Dorsolateral prefrontal cortex (tissue), 120 donors: ENCODE measurements at regions of chr2 and their contacts with region 1.

Region 1: DNA sequence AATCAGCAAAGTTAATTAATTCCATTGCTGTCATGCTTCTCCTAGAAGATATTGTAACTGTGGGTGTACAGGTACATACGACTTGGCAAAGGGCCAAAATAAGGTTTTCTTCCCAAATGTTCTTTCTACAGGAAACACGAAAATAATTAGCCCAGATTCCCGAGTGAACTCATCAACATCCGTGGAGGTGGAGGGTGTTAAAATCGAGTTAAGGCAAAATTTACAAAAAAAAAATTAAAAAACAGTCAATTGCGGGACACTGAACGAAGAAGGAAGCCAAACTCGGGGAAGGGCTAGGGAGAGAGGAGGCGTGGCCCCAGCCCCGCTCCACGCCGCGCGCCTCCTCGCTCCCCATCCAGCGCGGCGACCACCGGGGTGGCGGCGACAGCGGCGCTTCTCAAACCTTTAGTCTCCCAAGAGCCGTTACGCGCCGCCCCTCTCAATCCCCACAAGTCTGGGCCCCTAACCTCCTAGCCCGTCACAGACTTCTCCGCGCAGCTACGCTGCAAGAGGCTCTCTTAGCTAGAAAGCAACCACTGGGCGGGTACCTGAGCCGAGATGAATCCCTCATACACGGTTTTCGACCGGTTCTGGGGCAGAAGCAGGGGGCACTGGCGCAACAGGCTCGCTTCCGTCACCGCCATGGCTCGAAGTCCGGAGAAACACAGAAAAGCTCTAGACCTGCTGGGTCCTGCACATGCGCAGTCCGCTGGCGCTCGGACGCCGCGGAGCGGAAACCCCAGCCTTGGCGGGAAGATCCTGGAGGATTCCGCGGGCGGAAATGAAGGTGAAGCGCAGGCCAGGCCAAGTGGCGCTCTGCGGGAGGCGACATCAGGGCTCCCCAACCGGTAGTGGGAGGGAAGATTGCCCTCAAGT is at the start of gene FANCL:
- DNase-seq: peak; percentile 77 to 94 (median 90)
- H3K4me3 ChIP-seq: peak within 1 kb of the TSS; percentile 66 to 99 (median 88)
- H3K27ac ChIP-seq: peak within 1 kb of the TSS; percentile 73 to 96 (median 90)
- H3K27me3 ChIP-seq: no peaks in the 10 kb centered on the region
- CTCF ChIP-seq: peak in 36 of 56 donors; percentile 11 to 59 (median 34)
- total RNA-seq, gene FANCL: 24.2 to 88.8 (median 42.6) TPM

Region 2: DNA sequence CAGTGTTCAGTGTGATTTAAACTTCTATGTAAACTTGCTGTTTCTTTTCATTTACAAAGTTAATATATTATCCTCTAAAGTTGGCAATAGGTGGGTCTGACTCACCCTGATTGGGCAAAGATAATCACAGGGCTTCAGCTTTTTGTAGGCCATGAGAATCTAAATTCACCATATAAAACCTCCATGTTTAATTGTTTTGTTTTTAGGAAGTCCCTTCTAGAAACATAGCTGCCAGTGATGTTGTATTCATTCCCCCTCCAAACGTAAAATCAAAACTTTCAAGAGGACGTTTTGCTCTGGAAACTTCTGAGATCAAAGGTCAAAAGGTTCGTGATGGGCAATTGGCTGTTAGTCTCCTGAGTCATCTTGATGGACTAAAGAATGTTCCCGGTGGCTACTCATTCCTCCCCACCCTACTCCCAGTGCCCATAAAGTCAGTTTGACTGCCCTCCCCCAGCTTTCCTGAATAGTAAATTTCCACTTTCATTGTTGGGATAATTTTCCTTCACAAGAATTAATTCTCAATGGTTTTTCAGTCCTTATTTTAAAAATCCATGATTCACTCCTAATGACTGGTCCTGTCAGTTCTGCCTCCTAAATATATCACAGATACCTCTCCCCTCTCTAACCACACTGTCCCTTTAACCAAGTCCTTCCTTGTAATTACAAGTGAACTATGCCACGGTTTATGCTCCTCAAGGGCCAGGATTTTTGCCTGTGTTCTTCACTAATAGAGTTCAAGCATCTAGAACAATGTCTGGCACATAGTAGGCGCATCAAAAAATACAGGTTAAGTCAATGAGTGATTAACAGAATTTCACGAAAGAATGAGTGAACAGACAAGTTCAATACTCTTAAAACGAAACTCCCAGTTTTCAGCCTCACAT is 358.7 kb before region 1 on chr2:
- intact Hi-C with region 1: loop called in 1 of 2 experiments (anchors 10 kb)
- DNase-seq: no peak
- H3K4me3 ChIP-seq: peak overlapping the region in 57 of 59 donors; percentile 14 to 70 (median 45)
- H3K27ac ChIP-seq: peak overlapping the region in 55 of 59 donors; percentile 7 to 86 (median 66)
- H3K27me3 ChIP-seq: no peaks in the 10 kb centered on the region
- CTCF ChIP-seq: no peak

Region 3: GRCh38 chr2:58146707-58147106 is 94.2 kb before region 1 on chr2:
- intact Hi-C with region 1: loop called in 1 of 2 experiments (anchors 10 kb)
- DNase-seq: no peak
- H3K4me3 ChIP-seq: no peak overlapping the region
- H3K27ac ChIP-seq: peak overlapping the region in 1 of 59 donors; percentile 10
- H3K27me3 ChIP-seq: no peaks in the 10 kb centered on the region
- CTCF ChIP-seq: no peak

Region 4: GRCh38 chr2:58271826-58272225 is 30.9 kb after region 1 on chr2:
- intact Hi-C with region 1: no loop called
- DNase-seq: no peak
- H3K4me3 ChIP-seq: peak overlapping the region in 1 of 59 donors; percentile 8
- H3K27ac ChIP-seq: peak overlapping the region in 39 of 59 donors; percentile 10 to 85 (median 48)
- H3K27me3 ChIP-seq: no peaks in the 10 kb centered on the region
- CTCF ChIP-seq: no peak

Region 5: DNA sequence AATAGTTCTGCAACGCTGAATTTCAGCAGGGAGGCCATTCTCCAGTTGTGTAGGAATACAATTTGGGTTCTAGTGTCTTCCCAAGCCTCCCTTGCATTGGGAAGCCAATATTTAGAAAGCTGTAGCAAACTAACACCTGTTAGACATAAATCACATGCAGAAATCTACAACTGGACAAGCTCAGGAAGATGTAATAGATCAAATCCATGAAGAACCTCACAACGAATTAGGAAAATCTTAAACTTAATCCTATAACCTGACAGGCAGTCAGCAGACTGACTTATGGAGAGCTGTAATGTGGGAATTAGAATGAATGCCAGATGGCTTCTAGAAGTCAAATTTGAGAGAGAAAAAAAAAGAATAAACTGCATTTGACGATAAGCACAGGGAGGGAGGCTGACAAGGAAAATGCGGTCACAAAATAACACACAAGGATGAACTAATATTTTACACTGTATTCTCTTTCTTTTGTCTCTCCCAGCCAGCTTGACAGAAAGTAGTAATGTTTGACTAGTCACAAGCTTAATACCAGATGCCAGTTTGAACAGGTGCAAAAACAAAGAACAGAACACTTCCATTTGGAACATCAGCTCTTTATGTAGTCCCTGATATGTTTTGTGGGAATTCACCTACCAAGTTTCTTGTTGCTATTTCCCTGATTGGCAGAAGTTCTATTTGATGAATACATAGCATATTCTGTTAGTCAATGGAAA is 51.0 kb after region 1 on chr2:
- intact Hi-C with region 1: loop called in 1 of 2 experiments (anchors 10 kb)
- DNase-seq: no peak
- H3K4me3 ChIP-seq: no peak overlapping the region
- H3K27ac ChIP-seq: peak overlapping the region in 10 of 59 donors; percentile 17 to 78 (median 70)
- H3K27me3 ChIP-seq: no peaks in the 10 kb centered on the region
- CTCF ChIP-seq: no peak

Region 6: DNA sequence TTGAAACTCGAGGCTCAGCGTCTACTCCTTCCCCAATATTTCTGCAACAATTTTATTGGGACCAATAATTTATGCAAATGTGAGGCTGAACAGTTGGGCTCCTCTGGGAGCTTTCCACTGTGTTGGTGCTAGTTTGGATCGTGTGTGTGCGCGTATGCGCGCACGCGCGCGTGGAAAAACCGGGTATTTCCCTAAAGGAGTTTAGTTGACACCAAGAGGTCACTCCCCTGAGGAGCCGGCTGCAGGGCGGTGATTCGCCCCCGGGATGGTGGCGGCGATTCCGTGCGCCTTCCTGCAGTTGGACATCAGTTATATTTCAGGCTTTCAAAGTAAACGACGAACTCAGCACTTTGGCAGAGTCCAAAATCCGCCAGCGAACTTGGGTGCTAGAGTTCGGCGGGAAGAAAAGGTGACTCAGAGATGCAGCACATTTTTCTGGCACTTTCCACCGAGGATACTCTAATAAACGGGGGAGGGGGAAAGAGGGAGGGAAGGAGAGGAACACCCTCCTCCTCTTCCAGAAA is 186.7 kb after region 1 on chr2:
- intact Hi-C with region 1: loop called (anchors 5 to 10 kb)
- DNase-seq: peak; percentile 9 to 81 (median 76)
- H3K4me3 ChIP-seq: peak overlapping the region; percentile 30 to 82 (median 66)
- H3K27ac ChIP-seq: peak overlapping the region; percentile 2 to 99 (median 95)
- H3K27me3 ChIP-seq: peaks cover 0 to 4% (median 0%) of the 10 kb centered on the region in 45 donors
- CTCF ChIP-seq: peak in 6 of 56 donors; percentile 15 to 33 (median 20)

Region 7: DNA sequence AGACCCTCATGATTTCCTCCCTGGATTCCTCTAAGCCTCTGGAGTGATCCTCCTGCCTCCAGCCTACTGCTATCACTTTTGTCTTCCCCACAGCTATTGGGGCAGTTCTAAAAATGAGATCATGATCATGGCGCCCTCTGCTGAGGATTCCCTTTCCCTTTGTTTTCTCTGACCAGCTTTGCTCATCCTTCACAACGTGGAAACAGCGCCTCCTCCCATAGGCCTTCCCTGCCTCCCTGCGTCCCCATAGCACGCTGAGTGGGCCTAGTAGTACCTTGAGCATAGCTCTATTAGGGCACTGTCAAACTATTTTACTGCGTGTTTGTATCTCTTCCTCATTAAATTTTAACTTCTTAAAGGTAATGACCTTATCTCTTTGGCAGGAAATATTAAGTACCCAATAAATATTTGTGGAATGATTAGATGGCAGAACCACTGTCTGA is 207.2 kb after region 1 on chr2:
- intact Hi-C with region 1: loop called in 1 of 2 experiments (anchors 5 kb)
- DNase-seq: peak; percentile 14 to 84 (median 71)
- H3K4me3 ChIP-seq: peak overlapping the region in 3 of 59 donors; percentile 4 to 31 (median 12)
- H3K27ac ChIP-seq: peak overlapping the region in 50 of 59 donors; percentile 5 to 81 (median 67)
- H3K27me3 ChIP-seq: no peaks in the 10 kb centered on the region
- CTCF ChIP-seq: peak; percentile 40 to 97 (median 74)

Region 8: DNA sequence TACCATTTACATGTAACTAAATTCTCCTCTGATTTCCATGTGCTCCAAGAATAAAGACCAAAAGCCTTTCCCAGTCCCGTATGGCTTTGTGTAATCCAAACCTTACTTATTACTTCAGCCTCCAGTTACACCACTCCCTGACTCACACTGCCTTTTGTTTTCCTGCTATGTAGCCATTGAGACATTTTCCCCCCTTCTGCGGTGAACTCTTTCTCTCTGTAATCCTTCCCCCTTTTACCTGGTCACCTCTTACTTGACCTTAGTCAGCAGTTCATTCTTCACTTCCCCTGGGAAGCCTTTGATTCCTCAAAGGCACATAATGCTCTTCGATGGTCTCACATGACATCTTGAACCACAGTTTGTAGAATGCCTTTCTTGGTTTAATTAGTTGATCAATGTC is 256.3 kb after region 1 on chr2:
- intact Hi-C with region 1: no loop called
- DNase-seq: no peak
- H3K4me3 ChIP-seq: no peak overlapping the region
- H3K27ac ChIP-seq: no peak overlapping the region
- H3K27me3 ChIP-seq: no peaks in the 10 kb centered on the region
- CTCF ChIP-seq: no peak